Astrocyte of the cerebellum (primary cell): ENCODE measurements at regions of chr4 and their contacts with region 1.

Region 1: GRCh38 chr4:87108142-87108546 is 112.3 kb downstream of the KLHL8 start:
- DNase-seq: peak; percentile 58
- H3K4me3 ChIP-seq: no peak overlapping the region
- CTCF ChIP-seq: no peak

Region 2: GRCh38 chr4:86319390-86319789 is 788.8 kb before region 1 on chr4:
- in situ Hi-C with region 1: no loop called
- DNase-seq: no peak
- H3K4me3 ChIP-seq: no peak overlapping the region
- CTCF ChIP-seq: no peak

Region 3: DNA sequence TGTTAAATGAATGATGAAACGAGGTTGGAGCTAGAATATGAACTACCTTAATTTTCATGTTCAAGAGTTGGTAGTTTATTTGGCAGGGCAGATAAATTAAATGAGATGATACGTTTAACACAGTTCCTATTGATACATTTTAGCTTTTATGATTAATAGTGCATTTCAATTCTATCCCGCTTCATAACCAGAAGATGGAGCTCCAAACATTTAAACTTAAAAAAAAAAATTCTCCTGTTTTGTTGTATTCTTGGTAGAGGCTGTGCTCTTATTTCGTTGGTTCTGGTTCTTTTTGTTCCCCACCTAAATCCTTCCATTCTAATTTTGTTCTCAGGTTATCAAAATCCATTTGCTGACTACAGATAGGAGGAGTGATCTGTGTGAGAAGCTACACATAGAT is 585.8 kb before region 1 on chr4:
- in situ Hi-C with region 1: loop called (anchors 25 kb)
- DNase-seq: no peak
- H3K4me3 ChIP-seq: no peak overlapping the region
- CTCF ChIP-seq: no peak

Region 4: GRCh38 chr4:86908251-86908657 is 199.9 kb before region 1 on chr4:
- in situ Hi-C with region 1: no loop called
- DNase-seq: no peak
- H3K4me3 ChIP-seq: no peak overlapping the region
- CTCF ChIP-seq: no peak

Region 5: DNA sequence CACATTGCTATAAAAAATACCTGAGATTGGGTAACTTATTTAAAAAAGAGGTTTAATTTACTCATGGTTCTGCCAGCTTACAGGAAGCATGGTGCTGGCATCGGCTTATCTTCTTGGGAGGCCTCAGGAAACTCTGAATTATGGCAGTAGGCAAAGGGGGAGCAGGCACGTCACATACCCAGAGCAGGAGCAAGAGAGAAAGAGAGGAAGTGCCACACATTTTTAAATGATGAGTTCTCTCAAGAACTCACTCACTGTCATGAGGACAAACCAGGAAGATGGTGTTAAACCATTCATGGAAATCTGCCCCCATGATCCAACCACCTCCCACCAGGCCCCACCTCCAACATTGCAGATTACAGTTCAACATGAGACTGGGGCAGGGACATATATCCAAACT is 183.3 kb before region 1 on chr4:
- in situ Hi-C with region 1: loop called (anchors 5 kb)
- DNase-seq: no peak
- H3K4me3 ChIP-seq: no peak overlapping the region
- CTCF ChIP-seq: no peak